PC-9 (cell line): ENCODE measurements at regions of chr19 and their contacts with region 1.

Region 1: DNA sequence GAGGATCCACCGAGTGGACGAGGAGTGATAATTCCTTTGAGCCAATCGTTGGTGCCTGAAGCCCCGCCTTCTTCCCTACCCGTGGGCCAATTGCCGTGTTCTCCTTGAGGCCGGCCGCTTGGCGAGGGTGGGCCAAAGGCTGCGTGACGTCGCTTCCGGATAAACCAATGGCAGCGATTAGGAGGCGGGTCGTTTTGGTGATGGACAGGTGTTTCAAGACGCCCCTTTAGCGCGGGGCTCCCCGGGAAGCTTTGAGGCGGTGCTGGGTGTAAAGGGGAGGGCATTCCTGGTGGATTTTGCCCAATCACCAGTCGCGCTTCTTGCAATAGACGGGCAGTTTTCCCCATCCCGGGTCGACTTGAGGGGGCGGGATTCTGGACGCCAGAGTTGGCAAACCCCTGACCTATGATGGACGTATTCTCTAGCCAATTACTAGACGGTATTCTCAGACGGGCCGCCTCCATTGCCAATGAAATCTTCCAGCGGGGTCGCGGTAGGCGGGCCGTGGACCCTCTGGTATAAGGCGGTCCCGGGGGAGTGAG is 310 bp upstream of the PRMT1 start:
- DNase-seq: peak; percentile 99
- H3K4me3 ChIP-seq: peak overlapping the region; percentile 99
- H3K27ac ChIP-seq: peak overlapping the region; percentile 91
- H3K4me1 ChIP-seq: peaks cover 21% of the 10 kb centered on the region
- H3K27me3 ChIP-seq: no peaks in the 10 kb centered on the region
- CTCF ChIP-seq: no peak

Region 2: GRCh38 chr19:49118565-49119410 is 558.0 kb before region 1 on chr19 and contains the start of gene C19orf73:
- CTCF ChIA-PET with region 1: no interaction called
- POLR2A ChIA-PET with region 1: no interaction called
- intact Hi-C with region 1: no loop called
- DNase-seq: peak; percentile 80 to 96
- H3K4me3 ChIP-seq: peak within 1 kb of the TSS; percentile 74
- H3K27ac ChIP-seq: peak within 1 kb of the TSS; percentile 63
- H3K4me1 ChIP-seq: peaks cover 8% of the 10 kb centered on the region
- H3K27me3 ChIP-seq: peaks cover 13% of the 10 kb centered on the region
- CTCF ChIP-seq: no peak
- total RNA-seq, gene C19orf73: 1.5 and 3.0 TPM in 2 replicates

Region 3: GRCh38 chr19:49391581-49392399 is 285.0 kb before region 1 on chr19:
- CTCF ChIA-PET with region 1: no interaction called
- POLR2A ChIA-PET with region 1: no interaction called
- intact Hi-C with region 1: loop called (anchors 5 kb)
- DNase-seq: peak; percentile 61 to 77
- H3K4me3 ChIP-seq: no peak overlapping the region
- H3K27ac ChIP-seq: no peak overlapping the region
- H3K4me1 ChIP-seq: no peaks in the 10 kb centered on the region
- H3K27me3 ChIP-seq: peaks cover 22% of the 10 kb centered on the region
- CTCF ChIP-seq: peak; percentile 95

Region 4: DNA sequence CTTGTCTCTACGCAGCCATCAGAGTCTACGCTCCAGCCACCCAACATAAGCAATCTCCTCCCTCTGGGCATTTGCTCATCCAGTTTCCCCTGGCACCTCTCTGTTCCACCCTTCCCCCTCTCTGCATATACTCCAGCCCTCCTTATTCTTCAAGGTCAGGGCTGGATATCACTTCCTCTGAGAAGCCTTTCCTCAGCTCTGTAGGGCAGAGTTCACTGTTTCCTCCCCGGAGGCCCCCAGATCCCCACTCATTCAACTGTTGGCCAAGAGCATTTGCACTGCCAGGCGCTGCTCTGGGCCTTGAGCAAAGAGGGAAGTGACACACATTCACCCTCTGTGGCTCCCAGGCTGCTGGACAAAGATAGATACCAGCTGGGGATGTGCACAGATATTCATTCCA is 161.0 kb before region 1 on chr19:
- CTCF ChIA-PET with region 1: no interaction called
- POLR2A ChIA-PET with region 1: interaction called, 11 read pairs
- intact Hi-C with region 1: no loop called
- DNase-seq: no peak
- H3K4me3 ChIP-seq: no peak overlapping the region
- H3K27ac ChIP-seq: no peak overlapping the region
- H3K4me1 ChIP-seq: no peaks in the 10 kb centered on the region
- H3K27me3 ChIP-seq: peaks cover 10% of the 10 kb centered on the region; the same call in 1 of the 2 replicates
- CTCF ChIP-seq: no peak

Region 5: DNA sequence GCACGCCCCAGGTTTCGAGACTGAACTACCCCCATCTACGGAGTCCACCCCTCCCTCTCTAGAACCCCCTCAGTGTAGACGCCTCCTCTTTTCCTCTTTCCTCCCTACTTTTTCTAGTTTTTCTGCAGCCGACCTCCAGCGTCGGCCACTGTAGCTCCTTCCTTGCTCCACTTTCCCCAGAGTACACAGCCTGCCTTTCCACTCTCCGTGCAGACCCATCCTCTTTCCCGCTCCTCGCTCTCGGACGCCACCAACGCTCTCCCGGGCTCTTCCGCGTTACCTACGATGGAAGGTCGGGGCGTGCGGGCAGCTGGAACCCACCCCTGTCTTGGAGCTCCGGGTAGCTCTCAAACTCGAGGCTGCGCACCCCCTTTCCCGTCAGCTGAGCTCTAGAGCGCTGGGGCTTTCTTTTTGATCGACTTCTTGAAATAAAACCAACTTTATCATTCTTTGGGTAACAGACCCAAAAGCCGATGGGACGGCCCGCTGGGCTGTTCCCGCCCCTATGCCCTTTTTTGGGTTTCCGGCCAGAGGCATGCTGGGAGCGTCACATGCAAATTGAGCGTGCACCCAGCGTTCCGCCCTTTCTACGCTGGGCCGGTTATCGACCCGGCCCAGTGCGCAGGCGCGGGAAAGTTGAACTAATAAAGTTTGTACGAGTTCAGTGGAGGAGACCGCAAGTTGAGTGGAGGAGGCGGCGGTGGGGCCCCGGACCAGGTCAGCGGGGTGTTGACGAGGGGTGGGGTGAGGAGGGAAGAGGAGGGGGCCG is 11.2 kb before region 1 on chr19 and contains the starts of genes BCL2L12 and IRF3:
- CTCF ChIA-PET with region 1: interaction called, 5 read pairs
- POLR2A ChIA-PET with region 1: interaction called, 14 read pairs
- intact Hi-C with region 1: no loop called
- DNase-seq: peak; percentile 92 to 95
- H3K4me3 ChIP-seq: peak within 1 kb of the TSS; percentile 95
- H3K27ac ChIP-seq: peak within 1 kb of the TSS; percentile 67
- H3K4me1 ChIP-seq: peaks cover 21% of the 10 kb centered on the region
- H3K27me3 ChIP-seq: no peaks in the 10 kb centered on the region
- CTCF ChIP-seq: no peak
- total RNA-seq, gene BCL2L12: 80.3 and 84.8 TPM in 2 replicates
- total RNA-seq, gene IRF3: 181 and 220 TPM in 2 replicates

Region 6: DNA sequence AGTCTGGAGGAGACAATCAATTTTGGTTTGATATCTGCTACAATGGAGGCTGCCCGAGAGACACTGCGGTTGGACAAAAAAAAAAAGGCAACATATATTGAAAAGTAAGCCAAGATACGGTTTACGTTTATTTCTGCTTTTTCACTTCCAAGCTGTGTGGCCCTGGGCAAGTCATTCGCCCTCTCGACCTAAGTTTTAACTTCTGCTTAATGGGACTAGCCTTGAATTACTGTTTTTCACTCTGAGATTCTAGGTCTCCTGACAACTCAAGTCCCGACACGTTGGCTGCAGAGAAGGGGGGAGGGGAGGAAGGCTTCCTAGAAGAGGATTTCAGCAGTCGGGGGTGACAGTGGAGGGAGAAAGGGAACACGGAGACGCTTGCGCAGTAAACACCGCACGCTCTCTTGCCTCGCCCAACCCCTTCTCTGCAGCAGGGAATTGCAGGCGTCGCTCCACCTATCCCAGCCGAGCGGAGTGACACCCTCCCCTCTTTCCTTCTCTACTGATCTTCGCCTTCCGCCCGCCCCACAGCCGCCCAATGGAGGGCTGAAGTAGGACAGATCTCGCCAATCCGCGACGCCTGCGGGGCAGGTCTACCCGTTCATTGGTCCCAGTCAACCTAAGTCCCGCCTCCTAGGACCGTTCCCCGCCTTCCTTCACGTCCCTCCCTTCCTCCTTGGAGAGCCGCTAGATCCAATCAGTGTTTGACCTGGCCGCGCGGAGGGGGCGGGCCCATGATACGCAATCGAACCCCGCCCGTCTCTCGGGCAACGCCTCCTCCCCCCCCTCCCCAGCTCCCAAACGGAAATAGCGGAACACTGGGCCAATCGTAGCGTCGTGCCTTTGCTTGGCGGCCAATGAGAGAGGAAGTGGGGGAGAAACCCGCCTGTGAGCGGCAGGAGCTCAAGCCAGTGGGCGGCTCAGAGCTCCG is 89.5 kb after region 1 on chr19:
- CTCF ChIA-PET with region 1: no interaction called
- POLR2A ChIA-PET with region 1: interaction called, 3 read pairs
- intact Hi-C with region 1: loop called (anchors 5 kb)
- DNase-seq: peak; percentile 99
- H3K4me3 ChIP-seq: peak overlapping the region; percentile 59
- H3K27ac ChIP-seq: peak overlapping the region; percentile 88
- H3K4me1 ChIP-seq: peaks cover 17% of the 10 kb centered on the region
- H3K27me3 ChIP-seq: no peaks in the 10 kb centered on the region
- CTCF ChIP-seq: no peak

Region 7: DNA sequence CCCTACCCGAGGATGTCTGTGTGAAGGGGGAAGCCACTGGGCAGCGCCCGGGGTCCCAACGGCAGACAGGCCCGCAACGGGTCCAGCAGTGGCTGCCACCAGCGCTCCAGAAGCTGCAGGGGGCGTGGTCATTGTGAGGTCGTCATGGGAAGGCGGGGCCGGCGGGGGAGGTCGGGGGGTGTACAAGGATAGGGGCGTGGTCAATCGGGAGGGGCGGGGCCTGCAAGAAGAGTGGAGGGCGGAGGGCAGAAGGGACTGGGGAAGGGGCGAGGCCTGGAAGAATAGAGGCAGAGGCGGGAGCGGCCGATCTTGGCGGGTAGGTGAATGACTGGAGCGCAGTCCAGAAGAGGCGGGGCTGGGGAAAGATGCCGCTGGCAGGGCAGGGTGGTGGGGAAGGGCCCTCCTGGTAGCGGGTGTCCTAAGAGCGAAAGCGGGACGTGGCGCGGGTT is 132.0 kb after region 1 on chr19:
- CTCF ChIA-PET with region 1: no interaction called
- POLR2A ChIA-PET with region 1: no interaction called
- intact Hi-C with region 1: no loop called
- DNase-seq: peak; percentile 46 to 80
- H3K4me3 ChIP-seq: peak overlapping the region; percentile 60
- H3K27ac ChIP-seq: no peak overlapping the region
- H3K4me1 ChIP-seq: peaks cover 8% of the 10 kb centered on the region
- H3K27me3 ChIP-seq: no peaks in the 10 kb centered on the region
- CTCF ChIP-seq: no peak

Region 8: GRCh38 chr19:49862376-49863253 is 185.9 kb after region 1 on chr19:
- CTCF ChIA-PET with region 1: interaction called, 10 read pairs
- POLR2A ChIA-PET with region 1: interaction called, 18 read pairs
- intact Hi-C with region 1: no loop called
- DNase-seq: no peak
- H3K4me3 ChIP-seq: no peak overlapping the region
- H3K27ac ChIP-seq: no peak overlapping the region
- H3K4me1 ChIP-seq: peaks cover 22% of the 10 kb centered on the region
- H3K27me3 ChIP-seq: no peaks in the 10 kb centered on the region
- CTCF ChIP-seq: peak; percentile 46; the same call in 1 of the 2 replicates

Region 9: DNA sequence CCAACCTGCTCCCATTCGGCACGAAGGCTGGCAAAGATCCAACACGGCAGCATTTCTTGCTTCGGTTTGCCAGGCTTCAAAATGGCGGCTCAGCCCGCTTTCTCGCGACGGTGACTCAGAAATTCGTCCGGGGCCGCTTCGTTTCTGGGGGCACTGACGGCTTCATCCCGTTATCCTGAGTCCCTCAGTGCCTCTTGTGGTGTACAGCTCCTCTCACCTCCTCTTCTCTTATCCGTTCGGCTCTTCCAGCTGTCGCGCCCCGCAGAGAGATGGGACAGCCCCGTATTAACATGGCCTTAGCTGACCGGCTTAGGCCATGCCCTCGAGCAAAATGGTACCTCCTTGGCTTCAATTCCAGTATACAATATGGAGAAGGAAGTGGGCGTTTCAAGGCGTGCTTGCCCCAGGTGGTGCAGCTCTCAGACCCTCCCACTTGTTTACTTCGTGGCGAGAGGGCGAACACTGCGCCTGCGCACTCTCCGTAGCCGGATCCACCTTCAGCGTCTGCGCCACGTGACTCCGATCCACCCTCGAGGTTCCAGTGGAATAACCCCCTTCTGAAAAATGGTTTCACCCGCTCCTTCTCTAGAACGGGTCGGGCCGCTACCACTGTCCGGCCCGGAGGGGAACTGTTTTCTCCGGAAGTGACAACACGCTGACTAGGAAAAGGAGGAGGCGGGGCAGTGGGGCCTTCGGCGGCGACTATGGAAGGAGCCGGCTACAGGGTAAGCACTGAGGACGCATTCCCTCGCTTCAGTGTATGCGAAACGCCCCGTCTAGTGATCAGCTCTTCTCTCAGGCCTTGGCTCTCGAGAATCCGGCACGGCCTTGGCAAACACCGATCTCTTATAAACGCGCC is 200.5 kb after region 1 on chr19 and contains the starts of genes AKT1S1 and TBC1D17:
- CTCF ChIA-PET with region 1: no interaction called
- POLR2A ChIA-PET with region 1: no interaction called
- intact Hi-C with region 1: loop called (anchors 2 kb)
- DNase-seq: peak; percentile 99
- H3K4me3 ChIP-seq: peak within 1 kb of the TSS; percentile 79
- H3K27ac ChIP-seq: peak within 1 kb of the TSS; percentile 92
- H3K4me1 ChIP-seq: peaks cover 21% of the 10 kb centered on the region
- H3K27me3 ChIP-seq: no peaks in the 10 kb centered on the region
- CTCF ChIP-seq: no peak
- total RNA-seq, gene AKT1S1: 109 and 143 TPM in 2 replicates
- total RNA-seq, gene TBC1D17: 52.1 and 62.3 TPM in 2 replicates